ENCODE measurements at regions of chr11 and their contacts with region 1.

Region 1: GRCh38 chr11:131217313-131218310 is 152.8 kb upstream of the NTM start:
- DNase-seq: no peak
- H3K4me3 Mint-ChIP-seq: no peak overlapping the region
- H3K27ac Mint-ChIP-seq: no peak overlapping the region
- H3K4me1 Mint-ChIP-seq: no peaks in the 10 kb centered on the region
- H3K27me3 Mint-ChIP-seq: no peaks in the 10 kb centered on the region

Region 2: GRCh38 chr11:131274233-131274632 is 56.6 kb after region 1 on chr11:
- intact Hi-C with region 1: loop called (anchors 5 kb)
- DNase-seq: no peak
- H3K4me3 Mint-ChIP-seq: no peak overlapping the region
- H3K27ac Mint-ChIP-seq: no peak overlapping the region
- H3K4me1 Mint-ChIP-seq: no peaks in the 10 kb centered on the region
- H3K27me3 Mint-ChIP-seq: no peaks in the 10 kb centered on the region